HepG2 (cell line): ENCODE measurements at regions of chr1 and their contacts with region 1.

Region 1: DNA sequence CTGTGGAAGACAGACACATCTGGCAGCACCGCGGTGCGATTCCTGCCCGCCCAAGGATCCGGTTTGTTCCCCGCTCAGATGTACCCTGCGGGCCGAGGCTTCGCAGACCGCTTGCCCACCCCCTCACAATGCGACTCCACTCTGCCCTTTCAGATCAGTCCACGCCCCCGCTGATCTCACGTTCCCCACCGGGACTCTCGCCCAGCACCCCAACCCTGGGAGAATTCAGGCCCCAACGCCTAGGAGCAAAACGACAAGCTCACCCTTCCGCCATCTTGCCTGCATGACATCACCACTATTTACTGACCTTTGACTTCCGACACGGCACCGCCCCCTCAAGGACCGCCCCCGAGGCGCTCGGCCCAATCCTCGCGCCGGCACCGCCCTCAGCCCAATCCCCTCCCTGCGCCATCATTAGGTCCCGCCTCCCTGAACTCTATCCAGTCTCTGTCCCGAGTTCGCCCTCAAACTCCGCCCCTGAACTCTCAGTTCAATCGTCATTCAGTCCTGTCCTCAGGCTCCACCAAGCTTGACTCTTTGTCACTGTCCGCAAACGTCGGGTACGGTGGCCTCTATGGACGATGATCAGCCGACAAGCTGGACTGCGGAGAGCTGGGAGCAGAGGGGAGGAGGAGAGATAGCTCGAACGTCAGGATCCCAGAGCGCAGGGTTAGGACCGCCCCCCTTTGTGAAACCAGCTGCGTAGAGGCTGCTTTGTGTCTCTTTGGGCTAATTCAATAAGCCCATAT is at the start of gene BSDC1:
- DNase-seq: peak; percentile 99
- ATAC-seq: peak; percentile 98
- H3K4me3 ChIP-seq: peak within 1 kb of the TSS; percentile 77 to 99 (median 91)
- H3K27ac ChIP-seq: peak within 1 kb of the TSS; percentile 96
- H3K4me1 ChIP-seq: peaks cover 31% of the 10 kb centered on the region
- H3K27me3 ChIP-seq: no peaks in the 10 kb centered on the region; a peak in 1 of 5 replicates
- CTCF ChIP-seq: peak; percentile 31; the same call in 1 of the 2 replicates
- EP300 ChIP-seq: no peak
- POLR2A ChIP-seq: peak; percentile 77 to 96
- RAD21 ChIP-seq: no peak; the same call in 1 of the 2 replicates
- total RNA-seq, gene BSDC1: 33.2 and 40.3 TPM in 2 replicates

Region 2: DNA sequence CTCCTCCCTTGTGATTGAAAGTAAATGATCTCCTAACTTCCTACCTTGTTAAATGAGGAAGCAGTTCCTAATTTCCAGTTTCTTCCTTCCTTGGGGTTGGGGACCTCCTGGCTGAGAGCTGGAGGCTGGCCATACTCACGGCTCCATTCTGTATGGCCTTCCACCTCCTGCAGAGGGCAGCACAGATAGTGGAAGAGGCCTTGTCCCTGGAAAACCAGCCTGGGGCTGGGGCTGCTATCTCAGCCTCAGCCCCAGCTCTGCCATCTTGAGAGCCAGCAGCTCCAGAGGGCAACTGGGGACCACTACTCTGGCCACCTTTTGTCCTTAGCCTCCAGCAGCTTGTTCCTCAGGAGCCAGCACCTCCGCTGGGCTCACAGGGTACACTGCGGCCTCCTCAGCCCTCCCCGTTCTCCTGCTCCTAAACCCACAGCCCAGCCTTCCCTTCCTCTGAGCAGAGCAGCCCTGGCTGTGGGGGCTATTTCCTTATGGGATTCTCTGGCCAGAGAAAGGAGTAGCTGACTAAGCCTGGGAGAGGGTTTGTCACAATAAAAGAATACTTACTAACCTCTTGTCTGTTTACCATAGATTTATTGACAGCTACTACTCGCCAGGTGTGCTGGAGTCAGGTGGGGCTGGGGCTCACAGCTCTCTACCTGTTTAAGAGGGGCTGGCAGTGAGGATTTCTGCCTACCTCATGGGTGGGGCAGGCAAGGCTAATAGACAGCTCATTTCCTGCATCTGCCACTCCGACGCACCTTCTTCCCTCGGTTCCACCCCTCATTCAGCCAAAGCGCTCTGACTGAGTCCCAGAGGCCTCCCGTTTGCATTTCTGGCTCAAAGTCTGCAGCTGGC is 178.5 kb before region 1 on chr1:
- CTCF ChIA-PET with region 1: no interaction called
- POLR2A ChIA-PET with region 1: interaction called, 14 read pairs
- in situ Hi-C with region 1: no loop called
- intact Hi-C with region 1: no loop called
- DNase-seq: peak; percentile 61
- ATAC-seq: peak; percentile 95
- H3K4me3 ChIP-seq: no peak overlapping the region
- H3K27ac ChIP-seq: no peak overlapping the region
- H3K4me1 ChIP-seq: peaks cover 16% of the 10 kb centered on the region
- H3K27me3 ChIP-seq: no peaks in the 10 kb centered on the region
- CTCF ChIP-seq: peak; percentile 89
- EP300 ChIP-seq: no peak
- POLR2A ChIP-seq: no peak
- RAD21 ChIP-seq: peak; percentile 90

Region 3: GRCh38 chr1:32438136-32438535 is 43.8 kb after region 1 on chr1:
- CTCF ChIA-PET with region 1: no interaction called
- POLR2A ChIA-PET with region 1: no interaction called
- in situ Hi-C with region 1: no loop called
- intact Hi-C with region 1: no loop called
- DNase-seq: no peak
- ATAC-seq: no peak
- H3K4me3 ChIP-seq: no peak overlapping the region
- H3K27ac ChIP-seq: no peak overlapping the region
- H3K4me1 ChIP-seq: no peaks in the 10 kb centered on the region
- H3K27me3 ChIP-seq: peaks cover 0 to 3% of the 10 kb centered on the region in 2 experiments; a peak in 3 of 5 replicates
- CTCF ChIP-seq: no peak
- EP300 ChIP-seq: no peak
- POLR2A ChIP-seq: no peak
- RAD21 ChIP-seq: no peak

Region 4: DNA sequence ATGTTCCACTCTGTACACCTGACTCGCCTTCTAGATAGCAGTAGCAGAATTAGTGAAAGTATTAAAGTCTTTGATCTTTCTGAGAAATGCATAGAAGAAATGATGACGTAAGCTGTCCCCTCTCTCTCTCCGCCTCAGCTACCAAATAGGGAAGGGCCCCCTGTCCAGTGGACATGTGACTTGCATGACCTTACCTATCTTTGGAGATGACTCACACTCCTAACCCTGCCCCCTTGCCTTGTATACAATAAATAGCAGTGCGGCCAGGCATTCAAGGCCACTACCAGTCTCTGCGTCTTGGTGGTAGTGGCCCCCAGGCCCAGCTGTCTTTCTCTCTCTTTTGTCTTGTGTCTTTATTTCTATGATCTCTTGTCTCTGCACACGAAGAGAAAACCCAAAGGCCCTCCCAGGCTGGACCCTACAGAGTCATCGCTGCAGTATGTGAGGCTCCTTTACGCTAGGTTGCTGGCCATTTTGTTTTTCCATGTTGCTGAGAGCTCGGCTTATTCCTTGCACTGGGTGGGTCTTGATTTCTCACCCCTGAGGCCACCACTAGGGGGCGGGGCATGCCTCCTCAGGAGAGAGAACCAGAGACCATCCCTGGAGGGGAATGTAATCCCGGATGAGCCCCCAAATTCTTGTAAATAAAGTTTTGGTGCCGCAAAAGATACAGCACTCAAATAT is 54.6 kb after region 1 on chr1:
- CTCF ChIA-PET with region 1: no interaction called
- POLR2A ChIA-PET with region 1: interaction called, 13 read pairs
- in situ Hi-C with region 1: no loop called
- intact Hi-C with region 1: no loop called
- DNase-seq: peak; percentile 75
- ATAC-seq: peak; percentile 96
- H3K4me3 ChIP-seq: peak overlapping the region; percentile 54 to 69 (median 61)
- H3K27ac ChIP-seq: peak overlapping the region; percentile 64
- H3K4me1 ChIP-seq: peaks cover 26% of the 10 kb centered on the region
- H3K27me3 ChIP-seq: peaks cover 0 to 8% of the 10 kb centered on the region in 2 experiments; a peak in 2 of 5 replicates
- CTCF ChIP-seq: peak; percentile 74
- EP300 ChIP-seq: no peak
- POLR2A ChIP-seq: peak; percentile 53 to 65; a peak in 3 of 4 replicates
- RAD21 ChIP-seq: no peak